Activated T-helper 1 cell treated with anti-CD3 and anti-CD28 coated beads, Interleukin-12 subunit alpha, Interleukin-12 subunit beta, Interleukin-2, Interleukin-4 antibody, amounts not matched to agents 30 ng/mL and 10 ng/mL and 1 ng/mL, durations not matched to agents 14 hours and 24 hours and 36 hours (primary cell): ENCODE measurements at regions of chr11 and their contacts with region 1.

Region 1: GRCh38 chr11:17760102-17761029 is 25.8 kb downstream of the KCNC1 start:
- DNase-seq: no peak
- H3K4me3 Mint-ChIP-seq: no peak overlapping the region
- H3K27ac Mint-ChIP-seq: no peak overlapping the region
- H3K4me1 Mint-ChIP-seq: no peaks in the 10 kb centered on the region
- H3K27me3 Mint-ChIP-seq: no peaks in the 10 kb centered on the region

Region 2: DNA sequence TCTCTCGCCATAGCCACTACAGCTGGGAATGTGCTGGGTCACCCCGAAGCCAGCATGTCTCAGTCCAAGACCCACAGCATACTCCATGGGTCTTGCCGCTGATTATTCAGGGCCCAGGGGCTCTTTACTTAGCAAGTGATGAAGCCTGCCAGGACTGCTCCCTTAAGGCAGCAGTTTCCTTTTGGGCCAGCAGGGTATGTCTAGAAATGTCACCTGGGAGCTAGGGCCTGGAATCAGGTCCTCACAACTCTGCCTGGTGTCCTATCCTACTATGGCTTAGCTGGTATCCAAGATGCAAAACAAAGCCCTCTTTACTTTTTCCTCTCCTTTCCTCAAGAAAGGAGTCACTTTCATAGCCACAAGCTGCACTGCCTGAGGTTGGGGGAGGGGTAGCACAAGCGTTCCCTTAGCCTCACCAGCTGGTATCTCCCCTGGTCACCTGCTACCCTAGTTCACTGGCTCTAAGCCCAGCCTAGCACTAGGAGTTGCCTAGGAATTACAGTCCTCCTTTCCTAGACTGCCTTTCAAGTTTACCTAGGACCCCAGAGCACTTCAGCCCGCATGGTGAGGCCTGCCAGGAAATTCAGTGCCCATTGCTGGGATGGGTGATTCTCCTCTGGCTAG is 431.4 kb before region 1 on chr11:
- intact Hi-C with region 1: no loop called
- DNase-seq: no peak
- H3K4me3 Mint-ChIP-seq: no peak overlapping the region
- H3K27ac Mint-ChIP-seq: no peak overlapping the region
- H3K4me1 Mint-ChIP-seq: no peaks in the 10 kb centered on the region
- H3K27me3 Mint-ChIP-seq: no peaks in the 10 kb centered on the region

Region 3: DNA sequence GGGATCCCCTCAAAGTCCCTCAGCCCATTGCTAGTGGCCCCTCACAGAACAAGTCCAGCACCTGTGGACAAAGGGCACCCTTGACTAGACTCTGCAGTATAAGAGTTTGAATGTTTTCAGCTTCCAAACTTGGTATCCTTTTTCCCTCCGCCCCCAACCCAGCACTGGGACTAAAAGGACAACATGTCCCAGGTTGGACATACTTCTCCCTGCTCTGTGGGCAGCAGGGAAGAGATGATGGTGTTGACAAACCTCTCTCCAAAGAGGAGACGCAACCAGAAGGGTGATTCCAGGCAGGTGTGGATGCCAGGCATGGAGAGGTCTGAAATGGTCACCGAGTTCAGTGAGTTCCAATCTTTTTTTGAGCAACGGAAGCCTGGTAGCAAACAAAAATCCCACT is 45.5 kb before region 1 on chr11:
- intact Hi-C with region 1: loop called (anchors 1 kb)
- DNase-seq: no peak
- H3K4me3 Mint-ChIP-seq: no peak overlapping the region
- H3K27ac Mint-ChIP-seq: no peak overlapping the region
- H3K4me1 Mint-ChIP-seq: no peaks in the 10 kb centered on the region
- H3K27me3 Mint-ChIP-seq: peaks cover 7% of the 10 kb centered on the region